MCF 10A (cell line): ENCODE measurements at regions of chr1 and their contacts with region 1.

Region 1: DNA sequence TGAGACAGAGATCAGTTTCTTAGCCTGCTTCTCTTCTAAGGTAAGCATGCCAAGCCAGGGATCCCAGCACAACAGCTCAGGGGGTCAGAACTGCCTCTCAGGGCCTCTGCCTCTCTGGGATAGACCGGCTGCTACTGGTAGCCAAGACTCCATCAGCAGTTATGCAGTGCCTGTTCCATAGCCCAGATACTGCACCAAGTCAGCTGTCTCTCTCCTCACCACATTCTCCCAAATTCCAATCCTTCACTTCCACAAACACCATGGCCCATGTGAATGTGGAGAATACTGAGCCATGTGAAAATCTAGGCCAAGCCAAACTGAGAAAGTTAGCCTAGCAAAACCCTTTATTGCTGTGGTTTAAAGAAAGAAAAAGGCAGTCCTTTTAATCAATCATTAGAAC is 37.5 kb downstream of the CDC42BPA start:
- DNase-seq: no peak
- H3K4me3 Mint-ChIP-seq: no peak overlapping the region
- H3K27ac Mint-ChIP-seq: peak overlapping the region; percentile 90
- H3K4me1 Mint-ChIP-seq: peaks cover 13% of the 10 kb centered on the region
- H3K27me3 Mint-ChIP-seq: no peaks in the 10 kb centered on the region
- CTCF ChIP-seq: no peak

Region 2: GRCh38 chr1:226761322-226761721 is 519.5 kb before region 1 on chr1:
- CTCF ChIA-PET with region 1: no interaction called
- POLR2A ChIA-PET with region 1: no interaction called
- intact Hi-C with region 1: no loop called
- DNase-seq: peak; percentile 39
- H3K4me3 Mint-ChIP-seq: no peak overlapping the region
- H3K27ac Mint-ChIP-seq: peak overlapping the region; percentile 28
- H3K4me1 Mint-ChIP-seq: peaks cover 37% of the 10 kb centered on the region
- H3K27me3 Mint-ChIP-seq: no peaks in the 10 kb centered on the region
- CTCF ChIP-seq: no peak

Region 3: GRCh38 chr1:227270554-227270953 is 10.3 kb before region 1 on chr1:
- CTCF ChIA-PET with region 1: interaction called, 4 read pairs
- POLR2A ChIA-PET with region 1: interaction called, 10 read pairs
- intact Hi-C with region 1: no loop called
- DNase-seq: no peak
- H3K4me3 Mint-ChIP-seq: no peak overlapping the region
- H3K27ac Mint-ChIP-seq: no peak overlapping the region
- H3K4me1 Mint-ChIP-seq: peaks cover 26% of the 10 kb centered on the region
- H3K27me3 Mint-ChIP-seq: no peaks in the 10 kb centered on the region
- CTCF ChIP-seq: no peak

Region 4: GRCh38 chr1:227299241-227299627 is 18.4 kb after region 1 on chr1:
- CTCF ChIA-PET with region 1: interaction called, 5 read pairs
- POLR2A ChIA-PET with region 1: interaction called, 40 read pairs
- intact Hi-C with region 1: no loop called
- DNase-seq: peak; percentile 55
- H3K4me3 Mint-ChIP-seq: peak overlapping the region; percentile 44
- H3K27ac Mint-ChIP-seq: peak overlapping the region; percentile 70
- H3K4me1 Mint-ChIP-seq: peaks cover 36% of the 10 kb centered on the region
- H3K27me3 Mint-ChIP-seq: no peaks in the 10 kb centered on the region
- CTCF ChIP-seq: no peak